Caco-2 (cell line): ENCODE measurements at regions of chr5 and their contacts with region 1.

Region 1: DNA sequence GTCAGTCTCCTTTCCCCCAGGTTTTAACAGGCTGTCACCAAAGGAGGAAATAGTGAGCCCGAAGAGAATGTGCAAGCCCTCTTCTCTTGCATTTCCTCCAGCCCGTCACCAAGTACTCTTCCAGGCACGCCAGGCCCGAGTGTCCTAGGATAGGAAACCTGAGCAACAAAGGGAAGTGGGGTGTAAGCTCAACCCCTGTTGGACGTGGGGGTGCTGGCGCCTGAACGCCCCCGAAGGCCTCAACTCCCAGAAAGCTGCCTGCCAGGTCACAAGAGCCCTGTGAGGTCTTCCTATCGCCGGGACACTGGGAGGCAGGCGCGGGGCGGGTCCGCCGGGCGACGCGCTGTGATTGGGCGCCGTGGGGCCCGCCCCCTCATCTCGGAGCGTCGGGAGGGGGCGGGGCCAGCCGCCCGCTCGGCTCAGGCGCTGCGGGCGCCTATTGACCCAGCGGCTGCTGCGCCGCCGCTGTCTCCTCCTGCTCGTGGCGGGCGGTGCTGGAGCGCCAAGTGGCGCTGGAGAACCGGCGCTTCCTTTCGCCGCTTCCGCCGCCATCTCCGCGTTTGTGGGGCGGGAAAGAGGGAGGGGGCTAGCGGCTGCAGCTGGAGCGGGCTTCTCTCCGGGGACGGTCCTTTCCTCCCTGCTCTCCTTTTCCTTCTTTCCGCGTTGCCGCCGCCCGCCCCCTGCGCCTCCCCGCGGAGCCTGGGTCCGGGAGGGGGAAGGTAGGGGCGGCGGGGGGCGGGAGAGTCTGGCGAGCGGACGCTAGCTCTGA is 572 bp upstream of the MAN2A1 start:
- DNase-seq: peak; percentile 89 to 92
- H3K4me3 ChIP-seq: peak overlapping the region; percentile 86
- H3K4me3 Mint-ChIP-seq: peak overlapping the region; percentile 94
- H3K27ac Mint-ChIP-seq: peak overlapping the region; percentile 98
- H3K4me1 ChIP-seq: 0 out of 2 replicates have a peak, but pooled peaks cover 6% of the 10 kb centered on the region
- H3K4me1 Mint-ChIP-seq: peaks cover 15% of the 10 kb centered on the region
- H3K27me3 ChIP-seq: no peaks in the 10 kb centered on the region
- H3K27me3 Mint-ChIP-seq: no peaks in the 10 kb centered on the region
- CTCF ChIP-seq: no peak

Region 2: GRCh38 chr5:108642167-108642906 is 1046.8 kb before region 1 on chr5:
- CTCF ChIA-PET with region 1: interaction called, 3 read pairs
- POLR2A ChIA-PET with region 1: no interaction called
- intact Hi-C with region 1: loop called (anchors 1 kb)
- DNase-seq: peak; percentile 79
- H3K4me3 ChIP-seq: peak overlapping the region; percentile 19; the same call in 1 of the 2 replicates
- H3K4me3 Mint-ChIP-seq: peak overlapping the region; percentile 52
- H3K27ac Mint-ChIP-seq: peak overlapping the region; percentile 3
- H3K4me1 ChIP-seq: no peaks in the 10 kb centered on the region
- H3K4me1 Mint-ChIP-seq: peaks cover 11% of the 10 kb centered on the region
- H3K27me3 ChIP-seq: no peaks in the 10 kb centered on the region
- H3K27me3 Mint-ChIP-seq: no peaks in the 10 kb centered on the region
- CTCF ChIP-seq: peak; percentile 88 to 94

Region 3: DNA sequence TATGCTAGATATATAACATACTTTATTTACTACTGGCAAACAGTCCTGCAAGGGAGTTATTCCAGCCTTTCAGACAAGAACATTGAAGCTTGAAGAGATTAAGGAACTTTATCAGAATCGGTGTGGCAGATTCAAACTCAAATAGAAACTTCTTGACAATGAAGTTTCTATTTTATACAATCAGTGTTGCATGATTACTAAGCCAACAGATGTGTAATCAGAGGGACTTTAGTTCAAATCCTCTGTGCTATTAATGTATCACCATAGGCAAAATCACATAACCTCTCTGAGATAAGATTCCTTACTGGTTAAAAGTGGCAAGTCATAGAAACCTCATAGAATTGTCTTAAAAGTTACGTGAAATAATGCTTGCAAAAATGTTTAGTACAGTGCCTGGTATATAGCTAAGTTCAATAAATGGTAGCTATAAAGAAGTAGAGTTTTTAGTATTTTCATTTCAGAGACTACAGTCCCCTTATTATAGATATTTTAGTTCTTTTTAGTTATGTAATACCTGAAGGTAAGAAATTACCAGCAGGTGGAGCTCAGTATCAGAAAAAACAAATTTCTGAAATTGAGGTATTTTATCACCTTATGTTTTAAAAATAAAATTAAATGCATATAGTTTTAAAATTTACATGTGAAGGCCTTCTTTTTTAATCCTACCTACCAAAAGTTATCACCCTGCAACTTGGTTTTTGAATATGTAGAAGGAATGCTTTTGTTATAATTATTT is 769.4 kb before region 1 on chr5:
- CTCF ChIA-PET with region 1: no interaction called
- POLR2A ChIA-PET with region 1: no interaction called
- intact Hi-C with region 1: loop called (anchors 5 kb)
- DNase-seq: no peak
- H3K4me3 ChIP-seq: no peak overlapping the region
- H3K4me3 Mint-ChIP-seq: no peak overlapping the region
- H3K27ac Mint-ChIP-seq: no peak overlapping the region
- H3K4me1 ChIP-seq: peaks cover 8% of the 10 kb centered on the region; the same call in 1 of the 2 replicates
- H3K4me1 Mint-ChIP-seq: peaks cover 16% of the 10 kb centered on the region
- H3K27me3 ChIP-seq: no peaks in the 10 kb centered on the region
- H3K27me3 Mint-ChIP-seq: no peaks in the 10 kb centered on the region
- CTCF ChIP-seq: peak; percentile 18 to 42

Region 4: GRCh38 chr5:109580225-109581015 is 108.7 kb before region 1 on chr5:
- CTCF ChIA-PET with region 1: no interaction called
- POLR2A ChIA-PET with region 1: interaction called, 4 read pairs
- intact Hi-C with region 1: loop called (anchors 2 kb)
- DNase-seq: no peak
- H3K4me3 ChIP-seq: no peak overlapping the region
- H3K4me3 Mint-ChIP-seq: no peak overlapping the region
- H3K27ac Mint-ChIP-seq: no peak overlapping the region
- H3K4me1 ChIP-seq: no peaks in the 10 kb centered on the region
- H3K4me1 Mint-ChIP-seq: no peaks in the 10 kb centered on the region
- H3K27me3 ChIP-seq: no peaks in the 10 kb centered on the region; the same call in 1 of the 2 replicates
- H3K27me3 Mint-ChIP-seq: peaks cover 6% of the 10 kb centered on the region
- CTCF ChIP-seq: no peak

Region 5: GRCh38 chr5:109826426-109826825 is 137.3 kb after region 1 on chr5:
- CTCF ChIA-PET with region 1: interaction called, 3 read pairs
- POLR2A ChIA-PET with region 1: no interaction called
- intact Hi-C with region 1: loop called (anchors 1 kb)
- DNase-seq: peak in 1 of 2 experiments; percentile 44
- H3K4me3 ChIP-seq: no peak overlapping the region
- H3K4me3 Mint-ChIP-seq: no peak overlapping the region
- H3K27ac Mint-ChIP-seq: peak overlapping the region; percentile 33
- H3K4me1 ChIP-seq: peaks cover 18% of the 10 kb centered on the region
- H3K4me1 Mint-ChIP-seq: peaks cover 16% of the 10 kb centered on the region
- H3K27me3 ChIP-seq: no peaks in the 10 kb centered on the region
- H3K27me3 Mint-ChIP-seq: no peaks in the 10 kb centered on the region
- CTCF ChIP-seq: no peak

Region 6: GRCh38 chr5:110590187-110590586 is 901.0 kb after region 1 on chr5:
- CTCF ChIA-PET with region 1: no interaction called
- POLR2A ChIA-PET with region 1: no interaction called
- intact Hi-C with region 1: loop called (anchors 1 kb)
- DNase-seq: peak in 1 of 2 experiments; percentile 17
- H3K4me3 ChIP-seq: no peak overlapping the region
- H3K4me3 Mint-ChIP-seq: no peak overlapping the region
- H3K27ac Mint-ChIP-seq: no peak overlapping the region
- H3K4me1 ChIP-seq: peaks cover 13% of the 10 kb centered on the region
- H3K4me1 Mint-ChIP-seq: peaks cover 10% of the 10 kb centered on the region
- H3K27me3 ChIP-seq: no peaks in the 10 kb centered on the region; the same call in 1 of the 2 replicates
- H3K27me3 Mint-ChIP-seq: no peaks in the 10 kb centered on the region
- CTCF ChIP-seq: peak; percentile 50 to 63